GM10248 (cell line): ENCODE measurements at regions of chr1 and their contacts with region 1.

Region 1: DNA sequence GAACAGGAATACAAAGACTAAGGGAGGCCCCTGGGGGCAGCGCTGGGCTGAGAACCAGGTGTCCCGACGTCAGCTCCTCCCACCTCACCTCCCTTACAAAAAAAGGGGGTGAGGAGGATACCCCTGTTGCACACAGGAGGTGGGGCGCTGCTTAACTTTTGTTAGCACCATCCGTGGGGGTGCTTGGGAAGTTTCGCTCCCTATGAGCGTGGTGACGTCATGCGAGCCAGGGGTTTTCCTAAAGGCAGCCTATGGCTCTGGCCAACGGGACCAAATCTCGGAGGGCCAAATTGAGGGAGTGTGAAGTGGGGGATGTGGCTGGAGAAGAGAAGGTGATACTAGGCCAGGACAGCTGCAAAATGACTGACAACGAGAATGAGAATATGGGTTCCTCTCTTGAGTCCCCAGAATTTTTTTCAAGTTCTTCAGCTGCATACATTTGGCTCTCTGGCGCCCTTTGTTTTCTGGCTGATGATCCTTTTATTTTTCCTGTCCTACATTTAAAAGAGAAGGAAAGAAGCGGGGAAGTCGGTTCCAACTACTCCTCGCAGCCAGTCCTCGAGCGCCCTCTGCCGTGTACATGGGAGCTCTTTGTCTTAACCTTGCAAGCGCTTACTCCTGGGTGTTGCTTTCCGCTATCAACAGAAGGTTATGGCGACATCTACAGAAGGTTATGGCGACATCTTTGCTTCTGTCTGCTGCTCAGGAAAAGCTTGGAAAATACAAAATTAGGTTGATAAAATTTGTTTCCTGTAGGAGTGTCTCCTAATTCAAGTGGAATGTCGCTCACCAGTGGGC is 48.0 kb upstream of the ZC3H11B start:
- DNase-seq: peak; percentile 50
- CTCF ChIP-seq: peak; percentile 73

Region 2: DNA sequence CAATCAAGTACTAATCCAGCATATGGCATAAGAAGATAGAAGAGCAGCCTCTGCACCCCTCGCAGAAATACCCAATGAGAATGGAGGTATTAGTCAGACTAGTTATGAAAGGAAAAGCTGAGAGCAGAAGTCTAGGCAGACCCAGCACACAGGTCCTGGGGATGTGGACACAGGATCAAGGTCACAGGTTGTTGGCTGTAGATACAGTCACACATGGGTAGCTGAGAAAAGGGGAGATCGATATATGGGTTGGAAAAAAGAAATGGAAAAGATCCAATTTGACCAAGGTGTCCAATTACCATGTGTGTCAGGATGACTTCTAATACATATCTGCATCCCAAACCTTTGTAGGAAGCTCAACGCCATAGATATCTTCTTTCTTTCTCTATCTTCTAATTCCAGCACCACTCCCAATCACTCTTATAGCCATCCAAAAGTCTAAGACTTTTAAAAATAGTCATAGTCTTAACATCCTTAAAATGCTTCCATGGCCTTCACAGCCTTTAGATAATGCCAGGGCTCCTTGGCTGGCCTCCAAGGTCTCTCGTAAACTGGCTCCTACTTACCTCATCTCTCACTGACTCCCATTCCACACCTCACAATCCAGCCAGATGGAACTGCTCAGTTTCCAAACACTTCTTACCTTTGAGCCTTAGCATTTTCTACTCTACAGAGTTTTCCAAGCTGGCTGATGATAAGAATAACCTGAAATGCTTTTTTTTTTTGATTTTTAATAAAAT is 39.6 kb before region 1 on chr1:
- CTCF ChIA-PET with region 1: interaction called, 10 read pairs
- POLR2A ChIA-PET with region 1: no interaction called
- DNase-seq: no peak
- CTCF ChIP-seq: no peak

Region 3: DNA sequence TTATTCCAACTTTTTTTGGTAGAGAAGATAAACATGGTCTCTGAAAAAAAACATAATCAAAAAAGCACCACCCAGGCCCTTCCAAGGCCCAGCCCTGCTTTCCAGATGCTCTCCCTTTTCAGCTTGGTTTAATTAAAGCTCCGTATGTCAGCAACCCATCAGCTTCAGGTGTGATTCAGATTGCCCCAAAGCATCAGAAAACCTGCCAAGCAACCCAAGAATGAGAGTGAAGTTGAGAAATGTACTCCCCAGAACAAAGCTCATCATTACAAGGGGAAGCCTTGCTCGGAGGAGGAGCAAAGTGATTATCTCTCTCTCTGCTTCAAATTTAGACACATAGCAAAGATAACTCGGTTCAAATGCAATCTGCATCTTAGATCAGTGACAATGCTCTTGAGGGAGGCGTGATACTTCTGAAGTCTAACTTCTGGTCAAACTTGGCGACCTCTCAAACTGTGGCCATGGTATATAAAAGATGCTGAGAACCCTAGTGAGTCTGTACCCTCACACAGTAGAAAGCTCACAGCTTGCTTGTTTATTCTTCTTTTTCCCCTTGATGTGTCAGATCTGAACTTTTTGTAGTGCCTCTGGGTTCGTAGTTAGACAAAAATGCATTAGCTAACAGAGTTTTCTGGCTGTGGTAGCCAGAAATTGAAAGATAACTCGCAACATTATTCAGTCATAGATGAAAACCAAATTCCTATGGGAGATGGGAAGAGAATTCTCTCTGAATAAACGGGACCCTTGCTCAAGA is 15.3 kb after region 1 on chr1:
- CTCF ChIA-PET with region 1: interaction called, 16 read pairs
- POLR2A ChIA-PET with region 1: no interaction called
- DNase-seq: no peak
- CTCF ChIP-seq: no peak

Region 4: DNA sequence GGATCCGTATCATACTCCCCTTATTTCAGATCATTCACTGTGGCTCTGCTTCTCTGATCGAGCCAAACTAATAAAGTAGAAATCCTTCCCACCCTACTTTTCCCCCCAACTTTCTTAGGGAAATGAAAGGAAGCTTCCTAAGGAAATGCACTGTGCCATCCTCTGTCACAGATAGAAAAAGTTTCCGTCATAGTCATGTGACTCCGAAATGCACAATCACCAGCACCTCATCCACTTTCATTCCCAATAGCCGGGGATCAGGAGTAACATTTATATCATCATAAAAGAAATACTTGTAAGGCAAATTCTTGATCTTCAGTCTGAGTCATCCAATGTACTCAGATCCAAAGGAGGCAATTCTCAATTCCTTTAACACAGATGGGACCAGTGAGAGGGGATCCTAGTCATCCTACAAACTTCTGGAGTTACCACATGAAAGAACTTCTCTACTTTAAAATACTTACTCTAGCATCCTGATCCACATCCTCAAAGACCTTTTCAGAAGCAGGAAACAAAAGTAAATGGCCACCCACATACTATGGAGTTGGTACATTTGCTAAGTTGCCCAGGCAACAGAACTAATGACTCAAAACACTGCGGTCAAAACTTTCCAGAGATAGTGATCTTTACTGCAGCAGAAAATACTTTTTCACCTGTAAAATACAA is 49.8 kb after region 1 on chr1:
- CTCF ChIA-PET with region 1: no interaction called
- POLR2A ChIA-PET with region 1: no interaction called
- DNase-seq: peak; percentile 31
- CTCF ChIP-seq: no peak

Region 5: GRCh38 chr1:219837274-219837993 is 176.6 kb after region 1 on chr1:
- CTCF ChIA-PET with region 1: no interaction called
- POLR2A ChIA-PET with region 1: no interaction called
- DNase-seq: peak; percentile 45
- CTCF ChIP-seq: peak; percentile 51